Heart right ventricle (tissue), 16 donors: ENCODE measurements at regions of chr13 and their contacts with region 1.

Region 1: GRCh38 chr13:43986421-43986981 is 106.8 kb downstream of the LACC1 start:
- DNase-seq: peak in 1 of 2 donors; percentile 16
- ATAC-seq: peak; percentile 71 to 96 (median 90)
- H3K4me3 ChIP-seq: no peak overlapping the region
- H3K27ac ChIP-seq: peak overlapping the region; percentile 24 to 82 (median 73)
- H3K4me1 ChIP-seq: peaks cover 0 to 41% (median 18%) of the 10 kb centered on the region in 9 donors
- H3K27me3 ChIP-seq: no peaks in the 10 kb centered on the region
- CTCF ChIP-seq: peak in 4 of 9 donors; percentile 8 to 44 (median 26)

Region 2: GRCh38 chr13:43915451-43915850 is 71.0 kb before region 1 on chr13:
- intact Hi-C with region 1: loop called in 1 of 10 experiments (anchors 2 kb)
- DNase-seq: no peak
- ATAC-seq: no peak
- H3K4me3 ChIP-seq: no peak overlapping the region
- H3K27ac ChIP-seq: no peak overlapping the region
- H3K4me1 ChIP-seq: peaks cover 0 to 17% (median 12%) of the 10 kb centered on the region in 9 donors
- H3K27me3 ChIP-seq: peaks cover 0 to 93% (median 0%) of the 10 kb centered on the region in 7 donors
- CTCF ChIP-seq: no peak

Region 3: GRCh38 chr13:43929947-43930346 is 56.6 kb before region 1 on chr13:
- intact Hi-C with region 1: no loop called
- DNase-seq: no peak
- ATAC-seq: no peak
- H3K4me3 ChIP-seq: no peak overlapping the region
- H3K27ac ChIP-seq: no peak overlapping the region
- H3K4me1 ChIP-seq: no peaks in the 10 kb centered on the region
- H3K27me3 ChIP-seq: peaks cover 0 to 87% (median 0%) of the 10 kb centered on the region in 7 donors
- CTCF ChIP-seq: no peak

Region 4: DNA sequence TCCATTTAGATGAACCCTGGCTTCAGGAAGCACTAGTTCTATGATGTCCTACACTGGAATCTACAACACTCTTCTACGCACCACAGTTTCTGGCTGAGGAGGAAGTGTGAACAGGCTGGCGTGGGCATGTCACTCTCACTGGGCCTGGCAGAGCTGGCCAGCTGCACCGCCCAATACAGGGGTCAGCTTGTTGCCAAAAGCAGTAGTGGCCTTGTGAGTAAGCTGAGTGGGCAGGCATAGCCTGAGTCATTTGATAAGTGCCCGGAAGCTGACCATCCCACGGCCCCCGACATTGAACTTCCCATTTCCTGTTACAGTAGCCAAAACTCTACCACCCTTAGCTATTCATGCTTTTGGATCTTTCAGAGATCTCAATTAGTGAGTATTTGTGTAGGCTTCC is 146.2 kb after region 1 on chr13:
- intact Hi-C with region 1: loop called in 1 of 10 experiments (anchors 5 kb)
- DNase-seq: peak; percentile 71 to 79
- ATAC-seq: peak; percentile 85 to 96 (median 91)
- H3K4me3 ChIP-seq: no peak overlapping the region
- H3K27ac ChIP-seq: peak overlapping the region in 9 of 10 donors; percentile 10 to 83 (median 68)
- H3K4me1 ChIP-seq: peaks cover 0 to 25% (median 16%) of the 10 kb centered on the region in 9 donors
- H3K27me3 ChIP-seq: no peaks in the 10 kb centered on the region
- CTCF ChIP-seq: no peak